ENCODE measurements at regions of chr9 and their contacts with region 1.

Region 1: DNA sequence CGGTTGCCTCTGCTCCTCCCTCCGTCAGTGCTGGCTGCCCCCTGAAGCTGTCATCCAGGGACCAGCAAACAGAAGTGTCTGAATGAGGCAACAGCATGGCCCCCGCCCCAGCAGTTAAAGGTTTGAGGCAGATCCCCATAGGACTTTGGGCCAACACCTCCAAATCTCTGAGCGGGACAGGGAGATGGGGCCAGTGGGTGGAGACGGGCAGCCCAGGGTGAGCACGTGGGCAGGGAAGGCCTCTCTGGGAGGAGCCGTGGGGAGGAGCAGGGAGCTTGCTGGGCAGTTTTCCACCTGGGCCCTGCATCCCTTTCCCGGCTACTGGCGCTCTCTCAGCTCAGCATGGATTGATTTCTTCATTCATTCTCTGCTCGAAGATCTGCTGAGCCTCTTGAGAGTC is 39.1 kb upstream of the NOTCH1 start:
- DNase-seq: no peak
- H3K4me3 ChIP-seq: no peak overlapping the region
- H3K27ac ChIP-seq: no peak overlapping the region
- H3K4me1 ChIP-seq: peaks cover 16 to 32% (median 21%) of the 10 kb centered on the region in 4 donors
- H3K27me3 ChIP-seq: no peaks in the 10 kb centered on the region
- CTCF ChIP-seq: no peak
- EP300 ChIP-seq: no peak
- POLR2A ChIP-seq: no peak

Region 2: DNA sequence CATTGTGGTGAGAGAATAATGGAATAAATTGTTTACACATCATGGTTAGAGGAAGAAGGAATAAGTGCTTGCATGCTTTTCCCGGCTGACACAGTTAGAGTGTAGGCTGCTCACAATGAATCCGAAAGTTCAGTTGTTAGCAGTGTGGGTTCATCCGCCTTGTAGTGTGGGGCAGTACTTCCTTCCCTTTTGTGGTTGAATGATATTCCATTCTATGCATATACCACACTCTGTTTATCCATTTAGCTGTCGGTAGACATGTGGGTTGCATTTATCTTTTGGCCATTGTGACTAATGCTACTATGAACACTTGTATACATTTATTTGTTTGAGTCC is 1859.4 kb before region 1 on chr9:
- in situ Hi-C with region 1: no loop called
- intact Hi-C with region 1: loop called (anchors 5 kb)
- DNase-seq: no peak
- H3K4me3 ChIP-seq: no peak overlapping the region
- H3K27ac ChIP-seq: no peak overlapping the region
- H3K4me1 ChIP-seq: peaks cover 0 to 23% (median 5%) of the 10 kb centered on the region in 4 donors
- H3K27me3 ChIP-seq: no peaks in the 10 kb centered on the region
- CTCF ChIP-seq: no peak
- EP300 ChIP-seq: no peak
- POLR2A ChIP-seq: no peak